Activated CD4-positive, alpha-beta memory T cell treated with anti-CD3 and anti-CD28 coated beads for 36 hours (primary cell): ENCODE measurements at regions of chr6 and their contacts with region 1.

Region 1: GRCh38 chr6:114108119-114109002 is 137.4 kb upstream of the HDAC2 start:
- DNase-seq: peak; percentile 48
- H3K4me3 Mint-ChIP-seq: no peak overlapping the region
- H3K27ac Mint-ChIP-seq: no peak overlapping the region
- H3K4me1 Mint-ChIP-seq: no peaks in the 10 kb centered on the region
- H3K27me3 Mint-ChIP-seq: peaks cover 14% of the 10 kb centered on the region

Region 2: GRCh38 chr6:113980937-113981554 is 127.3 kb before region 1 on chr6:
- CTCF ChIA-PET with region 1: interaction called, 12 read pairs
- POLR2A ChIA-PET with region 1: no interaction called
- intact Hi-C with region 1: no loop called
- DNase-seq: no peak
- H3K4me3 Mint-ChIP-seq: no peak overlapping the region
- H3K27ac Mint-ChIP-seq: no peak overlapping the region
- H3K4me1 Mint-ChIP-seq: no peaks in the 10 kb centered on the region
- H3K27me3 Mint-ChIP-seq: no peaks in the 10 kb centered on the region

Region 3: DNA sequence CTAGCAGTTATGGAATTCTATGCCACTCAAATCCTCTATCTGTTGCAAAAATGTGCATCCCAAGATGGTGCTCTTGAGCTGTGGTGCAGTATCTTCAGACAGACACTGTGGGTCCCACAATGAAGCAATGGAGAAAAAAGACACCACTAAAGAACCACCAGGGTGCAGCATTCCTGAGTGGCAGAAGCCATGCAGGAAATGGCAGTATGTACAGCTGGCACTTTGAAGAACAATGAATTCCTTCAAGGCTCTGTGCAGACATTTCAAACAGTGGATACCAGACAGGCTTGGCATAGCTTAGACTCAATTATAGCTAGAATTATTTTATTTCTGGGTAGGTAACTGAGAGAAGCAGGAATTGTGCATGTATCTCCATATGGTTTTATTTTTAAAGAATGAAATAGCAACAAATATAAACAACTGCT is 113.4 kb before region 1 on chr6:
- CTCF ChIA-PET with region 1: interaction called, 16 read pairs
- POLR2A ChIA-PET with region 1: no interaction called
- intact Hi-C with region 1: loop called (anchors 1 kb)
- DNase-seq: peak; percentile 33
- H3K4me3 Mint-ChIP-seq: no peak overlapping the region
- H3K27ac Mint-ChIP-seq: no peak overlapping the region
- H3K4me1 Mint-ChIP-seq: no peaks in the 10 kb centered on the region
- H3K27me3 Mint-ChIP-seq: peaks cover 5% of the 10 kb centered on the region

Region 4: DNA sequence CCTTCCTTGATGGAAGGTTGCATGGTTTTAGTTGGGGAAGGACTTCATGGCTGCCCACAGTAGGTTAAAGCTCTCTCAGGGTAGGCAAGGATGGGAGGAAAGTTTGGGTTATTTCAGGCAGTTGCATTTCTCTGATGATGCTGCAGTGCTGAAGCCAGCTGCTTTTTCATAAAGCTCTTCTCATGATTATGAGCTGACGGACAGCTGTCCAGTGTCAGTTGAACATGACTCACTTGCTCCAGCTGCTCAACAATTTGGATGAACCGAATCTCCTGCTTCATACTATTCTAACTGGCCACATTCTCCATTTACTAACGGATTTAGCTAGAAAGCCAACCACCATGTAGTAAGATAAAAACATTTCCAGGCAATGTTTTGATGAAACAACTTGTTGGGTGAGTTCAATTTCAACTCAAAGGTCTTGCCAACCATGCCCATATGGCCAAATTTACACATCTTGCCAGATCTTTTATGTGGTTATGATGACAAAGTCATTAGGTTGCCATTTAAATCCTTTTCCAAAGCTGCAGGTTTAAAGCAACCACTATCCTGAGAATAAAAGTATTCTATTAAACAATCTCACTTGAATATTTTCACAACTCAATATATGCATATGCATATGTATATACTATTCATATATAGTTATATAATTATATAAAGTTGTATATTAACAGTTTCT is 108.6 kb after region 1 on chr6:
- CTCF ChIA-PET with region 1: no interaction called
- POLR2A ChIA-PET with region 1: no interaction called
- intact Hi-C with region 1: no loop called
- DNase-seq: no peak
- H3K4me3 Mint-ChIP-seq: no peak overlapping the region
- H3K27ac Mint-ChIP-seq: no peak overlapping the region
- H3K4me1 Mint-ChIP-seq: no peaks in the 10 kb centered on the region
- H3K27me3 Mint-ChIP-seq: peaks cover 3% of the 10 kb centered on the region